HAP-1 (cell line): ENCODE measurements at regions of chrX and their contacts with region 1.

Region 1: GRCh38 chrX:1580735-1581531 is 10.5 kb upstream of the AKAP17A start:
- DNase-seq: peak; percentile 27 to 84
- H3K4me3 ChIP-seq: no peak overlapping the region
- H3K4me1 ChIP-seq: no peaks in the 10 kb centered on the region
- H3K27me3 ChIP-seq: no peaks in the 10 kb centered on the region

Region 2: GRCh38 chrX:1477801-1478458 is 103.0 kb before region 1 on chrX:
- in situ Hi-C with region 1: loop called (anchors 10 kb)
- DNase-seq: no peak
- H3K4me3 ChIP-seq: no peak overlapping the region
- H3K4me1 ChIP-seq: peaks cover 6% of the 10 kb centered on the region
- H3K27me3 ChIP-seq: no peaks in the 10 kb centered on the region